IMR-90 (cell line): ENCODE measurements at regions of chr12 and their contacts with region 1.

Region 1: DNA sequence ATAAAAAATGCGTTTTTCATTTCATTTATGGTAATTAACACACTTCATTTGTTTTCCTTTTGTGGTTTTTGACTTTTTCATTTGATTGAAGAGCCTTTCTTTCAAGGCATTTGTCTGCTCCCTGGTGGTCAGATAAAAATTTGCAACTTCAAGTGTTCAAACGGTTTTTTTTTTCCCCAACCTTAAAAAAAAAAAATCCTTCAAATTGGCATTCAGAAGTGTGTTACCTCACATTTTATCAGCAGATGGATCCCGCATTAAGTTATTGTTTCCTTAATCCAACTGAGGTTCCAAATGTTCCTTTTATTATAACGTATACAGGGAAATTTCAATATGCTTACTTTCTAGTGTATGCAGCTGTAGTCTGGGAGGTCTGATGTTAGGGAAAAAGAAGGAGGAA is 47.2 kb downstream of the MYF5 start:
- DNase-seq: peak; percentile 66
- ATAC-seq: peak; percentile 53; the same call in 1 of the 2 replicates
- H3K4me3 ChIP-seq: no peak overlapping the region
- H3K27ac ChIP-seq: no peak overlapping the region
- H3K4me1 ChIP-seq: peaks cover 2% of the 10 kb centered on the region; the same call in 1 of the 2 replicates
- H3K27me3 ChIP-seq: no peaks in the 10 kb centered on the region
- CTCF ChIP-seq: peak; percentile 75
- POLR2A ChIP-seq: no peak
- RAD21 ChIP-seq: peak; percentile 70

Region 2: GRCh38 chr12:79555028-79555930 is 1208.6 kb before region 1 on chr12:
- CTCF ChIA-PET with region 1: no interaction called
- POLR2A ChIA-PET with region 1: no interaction called
- dilution Hi-C with region 1: no loop called
- in situ Hi-C with region 1: no loop called
- intact Hi-C with region 1: loop called (anchors 10 kb)
- DNase-seq: peak; percentile 79
- ATAC-seq: peak; percentile 75
- H3K4me3 ChIP-seq: no peak overlapping the region
- H3K27ac ChIP-seq: no peak overlapping the region; the same call in 1 of the 2 replicates
- H3K4me1 ChIP-seq: peaks cover 15% of the 10 kb centered on the region; the same call in 1 of the 2 replicates
- H3K27me3 ChIP-seq: no peaks in the 10 kb centered on the region
- CTCF ChIP-seq: peak; percentile 89
- POLR2A ChIP-seq: no peak; the same call in 1 of the 2 replicates
- RAD21 ChIP-seq: peak; percentile 87

Region 3: GRCh38 chr12:80217011-80217535 is 546.8 kb before region 1 on chr12:
- CTCF ChIA-PET with region 1: no interaction called
- POLR2A ChIA-PET with region 1: no interaction called
- dilution Hi-C with region 1: no loop called
- in situ Hi-C with region 1: loop called (anchors 25 kb)
- intact Hi-C with region 1: no loop called
- DNase-seq: no peak
- ATAC-seq: no peak
- H3K4me3 ChIP-seq: no peak overlapping the region
- H3K27ac ChIP-seq: no peak overlapping the region
- H3K4me1 ChIP-seq: no peaks in the 10 kb centered on the region
- H3K27me3 ChIP-seq: no peaks in the 10 kb centered on the region
- CTCF ChIP-seq: no peak
- POLR2A ChIP-seq: no peak
- RAD21 ChIP-seq: no peak

Region 4: GRCh38 chr12:80313209-80313608 is 450.7 kb before region 1 on chr12:
- CTCF ChIA-PET with region 1: no interaction called
- POLR2A ChIA-PET with region 1: no interaction called
- dilution Hi-C with region 1: no loop called
- in situ Hi-C with region 1: no loop called
- intact Hi-C with region 1: loop called (anchors 2 kb)
- DNase-seq: no peak
- ATAC-seq: no peak
- H3K4me3 ChIP-seq: no peak overlapping the region
- H3K27ac ChIP-seq: no peak overlapping the region
- H3K4me1 ChIP-seq: no peaks in the 10 kb centered on the region
- H3K27me3 ChIP-seq: peaks cover 2% of the 10 kb centered on the region; the same call in 1 of the 2 replicates
- CTCF ChIP-seq: peak; percentile 38
- POLR2A ChIP-seq: no peak
- RAD21 ChIP-seq: 0 out of 2 replicates have a peak, but pooled peaks have one; percentile 9

Region 5: GRCh38 chr12:80472902-80473500 is 290.9 kb before region 1 on chr12:
- CTCF ChIA-PET with region 1: no interaction called
- POLR2A ChIA-PET with region 1: no interaction called
- dilution Hi-C with region 1: no loop called
- in situ Hi-C with region 1: no loop called
- intact Hi-C with region 1: loop called (anchors 1 kb)
- DNase-seq: peak; percentile 81
- ATAC-seq: peak; percentile 87
- H3K4me3 ChIP-seq: no peak overlapping the region
- H3K27ac ChIP-seq: peak overlapping the region; percentile 71; the same call in 1 of the 2 replicates
- H3K4me1 ChIP-seq: peaks cover 2% of the 10 kb centered on the region; the same call in 1 of the 2 replicates
- H3K27me3 ChIP-seq: no peaks in the 10 kb centered on the region
- CTCF ChIP-seq: peak; percentile 65
- POLR2A ChIP-seq: no peak
- RAD21 ChIP-seq: peak; percentile 69

Region 6: GRCh38 chr12:80936498-80937390 is 172.9 kb after region 1 on chr12:
- CTCF ChIA-PET with region 1: no interaction called
- POLR2A ChIA-PET with region 1: no interaction called
- dilution Hi-C with region 1: no loop called
- in situ Hi-C with region 1: no loop called
- intact Hi-C with region 1: loop called (anchors 5 kb)
- DNase-seq: peak; percentile 42
- ATAC-seq: peak; percentile 81
- H3K4me3 ChIP-seq: peak overlapping the region; percentile 98
- H3K27ac ChIP-seq: peak overlapping the region; percentile 74
- H3K4me1 ChIP-seq: no peaks in the 10 kb centered on the region
- H3K27me3 ChIP-seq: no peaks in the 10 kb centered on the region
- CTCF ChIP-seq: no peak
- POLR2A ChIP-seq: no peak
- RAD21 ChIP-seq: no peak

Region 7: GRCh38 chr12:81086342-81086741 is 322.5 kb after region 1 on chr12:
- CTCF ChIA-PET with region 1: no interaction called
- POLR2A ChIA-PET with region 1: no interaction called
- dilution Hi-C with region 1: no loop called
- in situ Hi-C with region 1: no loop called
- intact Hi-C with region 1: no loop called
- DNase-seq: no peak
- ATAC-seq: no peak
- H3K4me3 ChIP-seq: no peak overlapping the region
- H3K27ac ChIP-seq: no peak overlapping the region
- H3K4me1 ChIP-seq: no peaks in the 10 kb centered on the region
- H3K27me3 ChIP-seq: no peaks in the 10 kb centered on the region
- CTCF ChIP-seq: no peak
- POLR2A ChIP-seq: no peak
- RAD21 ChIP-seq: no peak